Right lobe of liver (tissue), 6 donors: ENCODE measurements at regions of chr6 and their contacts with region 1.

Region 1: GRCh38 chr6:105424175-105424783 is 21.4 kb upstream of the PREP start:
- DNase-seq: no peak
- ATAC-seq: peak; percentile 75 to 83 (median 81)
- H3K4me3 ChIP-seq: no peak overlapping the region
- H3K27ac ChIP-seq: no peak overlapping the region
- H3K4me1 ChIP-seq: no peaks in the 10 kb centered on the region
- H3K27me3 ChIP-seq: no peaks in the 10 kb centered on the region
- CTCF ChIP-seq: peak; percentile 61 to 69 (median 65)
- POLR2A ChIP-seq: no peak

Region 2: GRCh38 chr6:105087571-105088211 is 336.6 kb before region 1 on chr6:
- intact Hi-C with region 1: loop called in 1 of 2 experiments (anchors 10 kb)
- DNase-seq: no peak
- ATAC-seq: peak; percentile 85 to 90 (median 86)
- H3K4me3 ChIP-seq: no peak overlapping the region
- H3K27ac ChIP-seq: no peak overlapping the region
- H3K4me1 ChIP-seq: no peaks in the 10 kb centered on the region
- H3K27me3 ChIP-seq: no peaks in the 10 kb centered on the region
- CTCF ChIP-seq: peak; percentile 76 to 90 (median 86)
- POLR2A ChIP-seq: no peak

Region 3: GRCh38 chr6:105374010-105374420 is 50.3 kb before region 1 on chr6:
- intact Hi-C with region 1: no loop called
- DNase-seq: no peak
- ATAC-seq: no peak
- H3K4me3 ChIP-seq: no peak overlapping the region
- H3K27ac ChIP-seq: no peak overlapping the region
- H3K4me1 ChIP-seq: no peaks in the 10 kb centered on the region
- H3K27me3 ChIP-seq: no peaks in the 10 kb centered on the region
- CTCF ChIP-seq: no peak
- POLR2A ChIP-seq: no peak

Region 4: DNA sequence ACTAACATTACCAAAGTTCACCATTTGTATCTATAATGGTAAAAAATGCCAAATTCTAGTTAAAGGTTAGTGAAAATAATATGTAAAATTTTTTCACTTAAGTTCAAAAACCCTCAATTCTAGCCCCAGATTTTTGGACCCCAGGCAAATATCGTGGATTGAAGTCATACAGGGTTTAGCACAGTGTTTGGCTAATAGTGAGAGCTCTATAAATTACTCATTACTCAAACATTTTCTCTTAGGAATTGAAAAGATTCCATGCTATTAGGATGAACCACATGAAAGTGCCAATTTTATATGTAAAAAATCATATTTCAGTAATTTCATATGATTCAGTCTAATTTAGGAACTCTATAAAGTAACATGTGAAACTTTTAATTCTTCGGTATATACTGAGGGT is 148.9 kb after region 1 on chr6:
- intact Hi-C with region 1: no loop called
- DNase-seq: no peak
- ATAC-seq: no peak
- H3K4me3 ChIP-seq: no peak overlapping the region
- H3K27ac ChIP-seq: no peak overlapping the region
- H3K4me1 ChIP-seq: no peaks in the 10 kb centered on the region
- H3K27me3 ChIP-seq: peaks cover 0 to 4% of the 10 kb centered on the region in 2 donors
- CTCF ChIP-seq: no peak
- POLR2A ChIP-seq: no peak